ENCODE measurements at regions of chr18 and their contacts with region 1.

Region 1: DNA sequence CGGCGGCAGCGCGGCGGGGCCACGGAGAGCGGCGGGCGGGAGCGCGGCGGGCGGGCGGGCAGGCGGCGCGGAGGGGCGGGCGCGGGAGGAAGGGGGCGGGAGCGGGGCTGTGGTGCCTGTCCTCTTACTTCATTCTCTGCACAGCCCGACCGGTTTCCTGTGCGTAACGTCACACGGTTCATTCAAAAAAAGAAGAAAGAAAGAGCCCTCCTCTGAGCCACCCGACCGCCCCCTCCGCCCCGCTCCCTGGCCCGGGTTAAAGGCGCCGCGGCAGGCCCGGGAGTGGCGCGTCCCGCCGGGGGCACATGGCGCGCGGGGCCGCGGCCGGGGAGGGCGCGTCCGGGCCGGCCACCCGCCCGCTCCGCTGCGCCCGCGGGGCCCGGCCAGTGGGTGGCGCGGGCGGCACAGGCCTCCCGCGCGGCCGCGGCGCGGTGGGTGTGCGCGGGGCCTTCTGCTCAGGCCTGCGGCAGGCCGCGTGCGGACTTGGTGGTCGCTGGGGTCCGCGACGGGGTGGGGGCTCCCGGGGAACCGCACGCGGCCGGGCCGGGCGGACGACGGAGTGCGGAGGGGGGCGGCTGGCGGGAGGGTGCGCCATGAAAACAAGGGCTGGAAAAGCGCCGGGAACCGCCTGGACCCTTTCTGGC is 599 bp upstream of the BCL2 start:
- DNase-seq: peak; percentile 76 to 96 (median 84)
- ATAC-seq: peak; percentile 80
- H3K4me3 ChIP-seq: peak overlapping the region; percentile 94
- H3K4me3 Mint-ChIP-seq: peak overlapping the region; percentile 92
- H3K27ac ChIP-seq: peak overlapping the region in 1 of 2 donors; percentile 46
- H3K27ac Mint-ChIP-seq: peak overlapping the region; percentile 95
- H3K4me1 ChIP-seq: peaks cover 17% of the 10 kb centered on the region
- H3K4me1 Mint-ChIP-seq: peaks cover 56% of the 10 kb centered on the region
- H3K27me3 ChIP-seq: no peaks in the 10 kb centered on the region
- H3K27me3 Mint-ChIP-seq: no peaks in the 10 kb centered on the region
- CTCF ChIP-seq: no peak

Region 2: GRCh38 chr18:62522504-62523254 is 797.5 kb before region 1 on chr18 and contains the start of gene ZCCHC2:
- CTCF ChIA-PET with region 1: no interaction called
- POLR2A ChIA-PET with region 1: interaction called, 3 read pairs
- intact Hi-C with region 1: loop called (anchors 5 to 10 kb)
- DNase-seq: peak; percentile 95 to 100 (median 98)
- ATAC-seq: peak; percentile 74
- H3K4me3 ChIP-seq: peak within 1 kb of the TSS; percentile 92
- H3K4me3 Mint-ChIP-seq: peak within 1 kb of the TSS; percentile 98
- H3K27ac ChIP-seq: peak within 1 kb of the TSS; percentile 62 to 75
- H3K27ac Mint-ChIP-seq: peak within 1 kb of the TSS; percentile 93
- H3K4me1 ChIP-seq: peaks cover 25% of the 10 kb centered on the region
- H3K4me1 Mint-ChIP-seq: peaks cover 40% of the 10 kb centered on the region
- H3K27me3 ChIP-seq: no peaks in the 10 kb centered on the region
- H3K27me3 Mint-ChIP-seq: no peaks in the 10 kb centered on the region
- CTCF ChIP-seq: no peak
- total RNA-seq, gene ZCCHC2: 85.0 to 85.4 TPM

Region 3: DNA sequence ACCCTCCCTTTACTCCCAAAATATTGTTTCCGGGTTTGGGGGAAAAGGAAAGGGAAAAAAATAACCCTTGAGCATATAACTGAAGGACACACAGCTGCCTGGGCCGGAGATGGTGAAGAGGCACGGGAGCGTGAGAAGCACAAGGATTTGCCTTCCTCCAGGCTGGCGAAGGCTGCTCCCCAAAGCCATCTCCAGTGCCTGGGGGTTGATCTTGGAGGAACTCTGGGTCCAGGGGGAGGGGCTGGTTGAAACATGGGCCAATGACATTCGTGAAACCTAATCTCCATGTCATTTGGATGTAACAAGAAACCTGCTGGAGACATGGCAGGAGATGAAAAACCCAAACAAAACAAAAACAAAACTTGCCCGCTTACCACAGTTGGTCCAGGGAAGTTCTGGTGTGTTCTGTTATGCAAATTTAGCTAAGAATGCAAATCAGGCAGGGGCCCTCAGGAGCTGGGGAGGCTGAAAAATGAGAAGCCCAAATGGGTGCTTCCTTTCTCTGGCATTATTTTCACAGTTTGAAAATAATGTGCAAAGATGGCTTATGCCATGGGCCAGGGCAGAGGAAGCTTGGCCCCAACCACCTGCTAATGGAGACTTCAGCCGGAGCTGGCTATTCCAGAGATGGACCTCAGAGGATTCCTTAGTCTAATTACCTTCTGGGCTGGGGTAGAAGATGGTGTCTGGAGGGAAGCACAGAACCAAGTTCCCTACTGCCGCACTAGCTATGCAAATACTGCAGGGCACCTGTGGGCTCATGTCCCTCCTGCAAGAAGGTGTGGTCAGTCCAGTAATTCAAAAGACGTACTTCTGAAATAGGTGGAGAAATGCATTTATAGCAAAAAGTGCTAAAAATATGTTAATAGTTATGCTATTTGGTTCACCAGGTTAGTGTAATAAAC is 181.5 kb before region 1 on chr18:
- CTCF ChIA-PET with region 1: interaction called, 16 read pairs
- POLR2A ChIA-PET with region 1: interaction called, 23 read pairs
- intact Hi-C with region 1: no loop called
- DNase-seq: no peak
- ATAC-seq: peak; percentile 12
- H3K4me3 ChIP-seq: peak overlapping the region; percentile 38
- H3K4me3 Mint-ChIP-seq: peak overlapping the region; percentile 88
- H3K27ac ChIP-seq: peak overlapping the region; percentile 23 to 51
- H3K27ac Mint-ChIP-seq: peak overlapping the region; percentile 83
- H3K4me1 ChIP-seq: peaks cover 46% of the 10 kb centered on the region
- H3K4me1 Mint-ChIP-seq: peaks cover 70% of the 10 kb centered on the region
- H3K27me3 ChIP-seq: no peaks in the 10 kb centered on the region
- H3K27me3 Mint-ChIP-seq: no peaks in the 10 kb centered on the region
- CTCF ChIP-seq: no peak

Region 4: DNA sequence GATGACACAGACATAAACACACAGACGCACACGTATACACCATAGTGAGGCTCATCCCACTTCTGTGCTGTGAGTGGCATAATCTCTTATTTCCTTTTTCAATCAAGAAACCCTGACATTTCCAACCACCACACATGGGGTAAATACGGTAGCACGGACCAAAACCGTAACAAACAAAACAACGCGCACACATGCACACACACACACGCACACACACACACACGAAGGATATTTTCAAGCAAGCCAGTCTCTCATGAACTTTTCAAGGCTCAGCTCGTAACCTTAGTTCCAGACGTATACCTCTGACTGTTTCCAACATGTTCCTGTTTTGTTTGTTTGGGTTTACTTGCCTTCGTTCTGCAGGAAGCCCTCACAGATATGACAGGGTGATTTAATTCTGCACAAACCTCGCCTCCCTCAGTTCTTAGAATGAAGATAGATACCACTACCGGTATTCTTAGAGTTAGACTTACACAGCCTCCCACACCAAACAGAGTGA is 120.4 kb before region 1 on chr18:
- CTCF ChIA-PET with region 1: interaction called, 23 read pairs
- POLR2A ChIA-PET with region 1: interaction called, 6 read pairs
- intact Hi-C with region 1: loop called in 1 of 2 experiments (anchors 2 kb)
- DNase-seq: peak in 11 of 14 experiments; percentile 10 to 87 (median 39)
- ATAC-seq: peak; percentile 70
- H3K4me3 ChIP-seq: peak overlapping the region; percentile 68
- H3K4me3 Mint-ChIP-seq: no peak overlapping the region
- H3K27ac ChIP-seq: peak overlapping the region; percentile 66 to 67
- H3K27ac Mint-ChIP-seq: no peak overlapping the region
- H3K4me1 ChIP-seq: peaks cover 59% of the 10 kb centered on the region
- H3K4me1 Mint-ChIP-seq: peaks cover 37% of the 10 kb centered on the region
- H3K27me3 ChIP-seq: no peaks in the 10 kb centered on the region
- H3K27me3 Mint-ChIP-seq: no peaks in the 10 kb centered on the region
- CTCF ChIP-seq: no peak

Region 5: DNA sequence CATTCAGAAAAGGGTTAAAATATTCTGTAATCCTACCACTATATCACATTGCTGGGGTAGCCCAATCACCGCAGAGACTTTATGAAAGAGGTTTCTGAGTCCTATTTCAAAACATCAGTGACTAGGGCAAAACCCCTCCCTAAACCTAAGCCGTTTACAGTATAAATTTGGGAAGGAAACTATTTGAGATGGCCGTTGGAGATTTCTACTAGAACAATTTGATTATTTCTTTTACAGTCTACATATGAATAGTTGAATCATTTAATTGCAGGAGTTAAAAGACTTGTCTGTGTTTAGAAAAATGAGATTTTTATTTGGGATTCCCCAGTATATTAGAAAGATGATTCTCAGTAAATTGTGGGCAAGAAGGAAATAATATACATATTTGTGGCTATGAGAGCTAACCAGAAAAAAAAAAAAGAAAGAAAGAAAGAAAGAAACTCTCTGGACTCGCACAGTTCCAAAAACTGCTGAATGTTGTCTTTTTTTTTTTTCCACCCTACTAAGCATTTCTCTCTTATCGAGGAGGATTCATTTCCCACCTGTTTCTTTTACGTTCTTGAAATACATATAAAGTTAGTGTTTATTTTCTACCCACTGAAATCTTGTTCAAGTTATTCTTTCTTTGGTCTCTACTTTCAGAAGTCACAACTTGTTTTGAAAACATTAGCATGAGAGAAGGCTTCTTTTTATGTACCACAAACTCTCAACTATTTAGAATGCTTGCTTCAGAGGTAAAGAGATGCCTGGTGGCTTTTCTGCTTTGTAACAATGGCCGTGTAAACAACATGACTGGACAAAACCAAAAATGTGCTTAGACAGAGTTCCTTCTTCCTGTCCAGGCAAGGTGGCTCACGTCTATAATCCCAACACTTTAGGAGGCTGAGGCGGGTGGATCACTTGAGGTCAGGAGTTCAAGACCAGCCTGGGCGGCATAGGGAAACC is 66.5 kb before region 1 on chr18:
- CTCF ChIA-PET with region 1: interaction called, 4 read pairs
- POLR2A ChIA-PET with region 1: interaction called, 5 read pairs
- intact Hi-C with region 1: loop called in 1 of 2 experiments (anchors 5 kb)
- DNase-seq: peak in 1 of 14 experiments; percentile 22
- ATAC-seq: no peak
- H3K4me3 ChIP-seq: no peak overlapping the region
- H3K4me3 Mint-ChIP-seq: peak overlapping the region; percentile 50
- H3K27ac ChIP-seq: peak overlapping the region in 1 of 2 donors; percentile 26
- H3K27ac Mint-ChIP-seq: peak overlapping the region; percentile 63
- H3K4me1 ChIP-seq: peaks cover 19% of the 10 kb centered on the region
- H3K4me1 Mint-ChIP-seq: peaks cover 81% of the 10 kb centered on the region
- H3K27me3 ChIP-seq: no peaks in the 10 kb centered on the region
- H3K27me3 Mint-ChIP-seq: no peaks in the 10 kb centered on the region
- CTCF ChIP-seq: no peak

Region 6: DNA sequence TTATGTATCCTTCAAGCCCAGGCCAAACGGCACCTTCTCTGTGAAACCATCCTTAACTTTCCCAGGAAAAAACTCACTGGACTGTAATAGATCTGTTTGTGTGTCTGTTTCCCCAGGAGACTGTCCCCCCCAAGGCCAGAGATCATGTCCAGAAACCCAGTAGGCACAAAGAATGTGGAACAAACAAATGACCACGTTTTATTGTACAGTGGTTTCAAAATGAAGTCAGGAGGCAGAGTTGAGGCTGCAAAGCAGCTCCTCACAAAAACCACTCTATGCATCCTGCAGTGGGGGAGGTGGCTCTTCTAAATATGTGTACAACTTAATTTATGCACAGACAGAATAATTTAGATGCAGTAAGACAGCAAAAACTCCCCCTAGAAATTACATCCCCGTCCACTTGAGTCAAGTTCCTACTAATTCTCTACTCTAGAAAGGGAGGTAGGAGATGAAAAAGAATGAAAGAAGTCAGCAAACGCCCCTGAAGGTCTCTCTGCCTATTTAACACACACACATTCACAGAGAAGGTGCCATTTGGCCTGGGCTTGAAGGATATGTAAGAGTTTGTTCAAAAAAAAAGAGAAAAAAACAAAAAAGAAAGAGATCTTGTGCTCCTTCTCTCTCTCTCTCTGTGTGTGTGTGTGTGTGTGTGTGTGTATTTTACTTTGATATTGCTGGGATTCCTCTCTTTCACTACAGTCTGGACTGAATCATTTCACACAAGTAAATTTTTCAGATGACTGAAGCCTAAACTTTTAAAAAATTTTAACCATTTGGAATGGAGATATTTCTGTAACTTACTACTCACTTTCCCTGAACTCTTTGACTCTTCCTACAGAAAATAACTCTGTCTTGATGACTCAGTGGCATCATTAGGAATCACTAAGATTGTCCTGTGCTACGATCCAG is 20.1 kb before region 1 on chr18:
- CTCF ChIA-PET with region 1: interaction called, 26 read pairs
- POLR2A ChIA-PET with region 1: interaction called, 31 read pairs
- intact Hi-C with region 1: loop called in 1 of 2 experiments (anchors 2 kb)
- DNase-seq: peak in 4 of 14 experiments; percentile 12 to 66 (median 34)
- ATAC-seq: peak; percentile 69
- H3K4me3 ChIP-seq: no peak overlapping the region
- H3K4me3 Mint-ChIP-seq: peak overlapping the region; percentile 47
- H3K27ac ChIP-seq: peak overlapping the region in 1 of 2 donors; percentile 27
- H3K27ac Mint-ChIP-seq: peak overlapping the region; percentile 94
- H3K4me1 ChIP-seq: peaks cover 58% of the 10 kb centered on the region
- H3K4me1 Mint-ChIP-seq: peaks cover 78% of the 10 kb centered on the region
- H3K27me3 ChIP-seq: no peaks in the 10 kb centered on the region
- H3K27me3 Mint-ChIP-seq: no peaks in the 10 kb centered on the region
- CTCF ChIP-seq: no peak

Region 7: DNA sequence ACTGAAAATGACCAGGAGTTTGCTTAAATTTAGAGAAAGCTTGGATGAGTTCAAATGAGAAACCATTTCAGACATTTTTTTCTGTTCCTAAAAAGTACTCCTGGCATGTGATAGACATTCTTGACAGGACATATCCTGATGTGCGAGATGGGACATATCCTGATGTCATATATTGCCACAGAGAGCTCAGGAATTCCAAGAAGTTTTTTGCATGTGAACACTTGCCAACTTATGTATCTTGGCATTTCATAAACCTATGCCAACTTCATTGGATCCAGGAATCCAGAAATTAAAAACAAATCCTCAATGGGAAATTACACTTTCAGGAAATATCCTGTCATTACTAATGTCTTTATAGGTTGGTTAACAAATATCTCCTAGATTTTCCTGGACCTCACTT is 344.4 kb after region 1 on chr18:
- CTCF ChIA-PET with region 1: no interaction called
- POLR2A ChIA-PET with region 1: no interaction called
- intact Hi-C with region 1: no loop called
- DNase-seq: no peak
- ATAC-seq: no peak
- H3K4me3 ChIP-seq: no peak overlapping the region
- H3K4me3 Mint-ChIP-seq: no peak overlapping the region
- H3K27ac ChIP-seq: no peak overlapping the region
- H3K27ac Mint-ChIP-seq: no peak overlapping the region
- H3K4me1 ChIP-seq: no peaks in the 10 kb centered on the region
- H3K4me1 Mint-ChIP-seq: no peaks in the 10 kb centered on the region
- H3K27me3 ChIP-seq: no peaks in the 10 kb centered on the region
- H3K27me3 Mint-ChIP-seq: peaks cover 3% of the 10 kb centered on the region
- CTCF ChIP-seq: no peak